AG04449 (cell line): ENCODE measurements at regions of chr17 and their contacts with region 1.

Region 1: DNA sequence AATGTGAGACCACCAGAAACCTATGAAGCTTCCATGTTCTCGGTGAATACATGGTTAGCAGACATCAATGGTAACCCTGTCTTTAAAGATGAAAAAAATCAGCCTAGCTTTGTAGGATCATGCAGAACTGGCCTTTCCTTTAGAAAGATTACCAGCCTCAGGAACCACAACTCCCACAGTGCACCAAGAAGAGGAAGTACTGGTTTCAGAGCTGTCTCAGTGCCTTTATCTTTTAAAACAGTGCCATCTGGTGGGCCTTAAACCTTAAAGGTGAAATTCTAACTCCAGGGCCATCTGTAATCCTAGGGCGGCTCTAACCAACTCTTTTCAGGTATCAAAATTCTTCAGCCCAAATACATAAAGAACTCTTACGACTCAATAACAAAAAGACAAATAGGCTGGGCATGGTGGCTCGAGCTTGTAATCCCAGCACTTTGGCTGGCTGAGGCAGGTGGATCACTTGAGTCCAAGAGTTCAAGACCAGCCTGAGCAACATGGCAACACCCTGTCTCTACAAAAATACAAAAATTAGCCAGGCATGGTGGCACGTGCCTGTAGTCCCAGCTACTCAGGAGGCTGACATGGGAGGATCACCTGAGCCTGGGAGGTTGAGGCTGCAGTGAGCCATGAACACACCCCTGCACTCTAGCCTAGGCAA is 5.4 kb downstream of the ATPAF2 start:
- DNase-seq: peak; percentile 49
- H3K4me3 ChIP-seq: no peak overlapping the region
- CTCF ChIP-seq: peak; percentile 40

Region 2: DNA sequence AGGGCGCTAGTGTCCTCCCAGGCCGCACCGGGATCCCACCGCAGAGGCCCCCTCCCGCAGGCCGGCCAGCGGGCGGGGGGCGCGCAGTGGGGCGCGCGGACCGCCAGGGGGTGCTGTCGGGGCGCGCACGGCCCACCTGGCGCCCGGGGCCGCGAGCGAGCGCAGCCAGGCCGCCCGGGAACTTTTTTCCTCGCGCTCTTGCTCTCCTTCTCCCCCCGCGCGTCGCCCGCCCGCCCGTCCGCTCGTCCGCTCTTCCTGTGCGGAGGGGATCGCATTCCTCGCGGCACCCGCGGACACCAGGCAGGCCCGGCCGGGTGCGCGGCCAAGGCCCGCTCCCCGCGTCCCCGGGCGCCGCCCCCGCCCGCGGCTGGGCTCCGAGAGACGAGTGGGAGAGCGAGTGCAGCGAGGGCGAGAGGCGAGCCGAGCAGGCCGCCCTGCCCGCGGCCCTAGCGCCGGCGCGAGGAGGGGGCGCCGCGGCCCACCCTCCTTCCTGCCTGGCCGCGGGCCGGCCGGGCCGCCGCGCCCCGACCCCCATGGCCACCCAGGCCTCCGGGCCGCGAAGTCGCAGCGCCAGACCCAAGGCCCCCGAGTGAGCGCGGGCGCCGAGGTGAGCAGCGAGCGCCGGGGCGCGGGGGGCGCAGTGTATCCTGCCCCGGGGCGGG is 352.3 kb before region 1 on chr17 and contains the start of gene RAI1:
- CTCF ChIA-PET with region 1: interaction called, 10 read pairs
- POLR2A ChIA-PET with region 1: no interaction called
- DNase-seq: no peak
- H3K4me3 ChIP-seq: peak within 1 kb of the TSS; percentile 76
- CTCF ChIP-seq: peak; percentile 50

Region 3: GRCh38 chr17:17859909-17860765 is 173.4 kb before region 1 on chr17:
- CTCF ChIA-PET with region 1: interaction called, 23 read pairs
- POLR2A ChIA-PET with region 1: no interaction called
- DNase-seq: no peak
- H3K4me3 ChIP-seq: no peak overlapping the region
- CTCF ChIP-seq: peak; percentile 97

Region 4: DNA sequence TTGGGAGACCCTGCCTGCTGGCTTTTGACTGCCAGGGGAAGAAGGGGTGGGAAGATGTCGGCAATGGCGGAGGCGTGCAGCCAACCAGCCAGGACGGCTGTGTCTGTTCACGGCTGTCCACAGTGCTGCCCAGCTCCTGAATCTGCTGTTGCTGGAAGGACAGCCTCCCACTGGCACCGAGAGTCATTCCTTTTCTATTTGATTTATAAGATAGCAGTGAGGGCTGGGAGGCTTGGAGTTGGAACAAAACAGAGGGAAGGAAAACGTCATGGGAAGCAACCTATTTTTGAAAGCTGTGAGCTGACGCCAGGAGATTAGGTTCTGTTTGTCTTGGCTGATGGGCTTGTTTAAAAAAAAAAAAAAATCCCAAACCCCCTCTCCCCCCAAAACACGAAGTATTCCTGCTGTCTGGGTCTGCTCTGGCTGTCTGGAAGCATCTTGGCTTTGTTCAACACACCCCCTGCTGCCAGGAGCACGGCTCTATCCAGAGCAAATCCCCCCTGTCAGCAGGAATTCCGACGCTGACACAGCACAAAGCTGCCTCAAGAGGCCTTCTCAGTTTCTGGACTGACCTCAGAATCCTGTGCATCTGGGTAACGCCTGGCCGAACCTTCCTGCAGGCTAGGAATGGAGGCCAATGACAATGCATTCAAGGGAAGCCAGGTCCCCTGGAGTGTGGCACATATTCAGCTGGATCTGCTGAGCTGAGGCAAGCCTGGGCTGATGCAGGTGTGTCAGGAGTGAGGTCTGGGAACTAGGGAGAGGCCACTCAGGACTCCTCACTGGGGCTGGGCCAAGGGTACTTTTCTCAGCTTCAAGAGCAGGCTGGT is 155.8 kb before region 1 on chr17:
- CTCF ChIA-PET with region 1: interaction called, 12 read pairs
- POLR2A ChIA-PET with region 1: no interaction called
- DNase-seq: peak; percentile 71
- H3K4me3 ChIP-seq: peak overlapping the region; percentile 13; the same call in 1 of the 2 replicates
- CTCF ChIP-seq: no peak

Region 5: DNA sequence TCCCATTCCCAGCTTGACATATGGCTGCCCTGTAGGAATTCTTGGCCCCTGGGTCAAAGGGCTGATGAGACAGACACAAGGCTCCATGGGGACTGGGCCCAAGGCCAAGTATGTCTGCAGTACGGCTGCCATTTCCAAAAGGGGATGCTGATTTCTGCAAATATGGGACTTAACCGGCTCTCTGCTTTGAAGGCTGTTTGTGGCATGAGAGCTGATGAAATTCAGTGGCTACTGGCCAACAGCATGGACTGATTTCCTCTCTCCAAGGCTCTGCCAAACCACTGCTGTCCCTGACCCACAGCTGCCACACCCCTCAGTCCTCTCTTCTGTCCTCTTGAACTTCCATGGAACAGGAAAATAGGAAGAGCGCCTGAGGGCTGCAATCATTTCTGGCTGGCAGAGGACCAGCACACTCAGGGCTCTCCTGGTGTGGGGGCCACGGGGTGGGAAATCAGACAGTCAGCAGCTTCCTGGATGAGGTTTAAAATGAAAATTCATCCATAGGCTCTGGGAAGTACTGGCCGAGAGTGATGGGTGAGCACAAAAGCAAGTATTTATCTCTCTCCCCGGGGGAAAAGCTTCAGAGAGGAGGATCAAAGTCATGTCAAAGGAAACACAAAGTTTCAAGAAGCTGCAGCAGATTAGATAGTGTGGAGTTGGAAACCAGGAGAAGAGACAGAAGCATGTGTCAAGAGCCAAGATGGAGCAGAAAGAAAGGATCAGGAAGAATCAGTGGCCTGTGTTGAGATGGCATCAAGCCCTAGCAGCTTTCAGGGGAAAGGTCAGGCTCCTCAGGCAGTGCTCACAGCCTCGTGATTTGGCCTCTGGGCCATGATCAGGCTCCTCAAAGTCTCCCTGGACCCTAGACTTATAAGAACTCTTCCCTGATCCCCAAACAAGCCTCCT is 132.7 kb before region 1 on chr17:
- CTCF ChIA-PET with region 1: interaction called, 29 read pairs
- POLR2A ChIA-PET with region 1: no interaction called
- DNase-seq: peak; percentile 80
- H3K4me3 ChIP-seq: no peak overlapping the region
- CTCF ChIP-seq: no peak

Region 6: GRCh38 chr17:17947966-17948365 is 85.6 kb before region 1 on chr17:
- CTCF ChIA-PET with region 1: no interaction called
- POLR2A ChIA-PET with region 1: no interaction called
- DNase-seq: no peak
- H3K4me3 ChIP-seq: no peak overlapping the region
- CTCF ChIP-seq: no peak

Region 7: GRCh38 chr17:17985555-17985954 is 48.0 kb before region 1 on chr17:
- CTCF ChIA-PET with region 1: interaction called, 42 read pairs
- POLR2A ChIA-PET with region 1: no interaction called
- DNase-seq: no peak
- H3K4me3 ChIP-seq: no peak overlapping the region
- CTCF ChIP-seq: peak; percentile 15